Activated CD8-positive, alpha-beta memory T cell treated with anti-CD3 and anti-CD28 coated beads, Interleukin-2, amount 10 ng/mL, durations not matched to agents 7 days and 5 days (primary cell): ENCODE measurements at regions of chr3 and their contacts with region 1.

Region 1: DNA sequence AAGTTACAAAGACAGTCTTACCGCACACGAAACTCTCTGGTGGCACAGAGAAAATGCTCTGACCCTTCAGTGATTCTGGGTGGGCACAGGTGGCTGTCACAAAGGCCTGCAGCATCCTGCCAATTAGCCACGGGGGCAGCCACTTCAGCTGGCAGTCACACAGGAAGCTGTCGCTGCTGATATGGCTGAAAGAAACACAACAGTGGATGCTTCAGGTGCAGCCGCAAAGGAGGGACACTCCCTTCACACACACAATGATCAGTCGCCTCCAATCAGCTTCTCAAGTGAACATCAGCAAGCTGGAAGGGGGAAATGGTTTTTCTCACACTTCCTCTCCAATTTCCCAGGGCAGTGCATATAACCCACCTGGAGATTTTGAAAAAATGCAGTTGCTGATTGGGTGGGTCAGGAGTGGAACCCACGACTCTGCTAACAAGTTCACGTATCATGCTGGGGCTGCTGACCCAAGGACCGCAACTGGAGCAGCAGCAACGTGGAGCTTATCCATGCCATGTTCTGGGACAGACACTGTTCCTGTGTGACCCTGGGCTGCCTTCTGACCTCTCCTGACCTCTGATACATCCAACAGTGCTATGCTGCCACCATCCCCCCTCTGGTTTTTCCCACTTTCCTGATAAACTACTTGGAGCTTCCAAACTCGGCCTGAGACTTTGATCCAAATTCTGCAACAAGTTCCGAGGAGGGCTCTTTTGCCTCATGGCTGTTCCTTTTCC is 106.6 kb downstream of the LRIG1 start:
- DNase-seq: peak; percentile 73
- ATAC-seq: peak; percentile 88
- H3K4me3 Mint-ChIP-seq: peak overlapping the region; percentile 11
- H3K27ac Mint-ChIP-seq: peak overlapping the region; percentile 90
- H3K4me1 Mint-ChIP-seq: peaks cover 23% of the 10 kb centered on the region
- H3K27me3 Mint-ChIP-seq: no peaks in the 10 kb centered on the region

Region 2: DNA sequence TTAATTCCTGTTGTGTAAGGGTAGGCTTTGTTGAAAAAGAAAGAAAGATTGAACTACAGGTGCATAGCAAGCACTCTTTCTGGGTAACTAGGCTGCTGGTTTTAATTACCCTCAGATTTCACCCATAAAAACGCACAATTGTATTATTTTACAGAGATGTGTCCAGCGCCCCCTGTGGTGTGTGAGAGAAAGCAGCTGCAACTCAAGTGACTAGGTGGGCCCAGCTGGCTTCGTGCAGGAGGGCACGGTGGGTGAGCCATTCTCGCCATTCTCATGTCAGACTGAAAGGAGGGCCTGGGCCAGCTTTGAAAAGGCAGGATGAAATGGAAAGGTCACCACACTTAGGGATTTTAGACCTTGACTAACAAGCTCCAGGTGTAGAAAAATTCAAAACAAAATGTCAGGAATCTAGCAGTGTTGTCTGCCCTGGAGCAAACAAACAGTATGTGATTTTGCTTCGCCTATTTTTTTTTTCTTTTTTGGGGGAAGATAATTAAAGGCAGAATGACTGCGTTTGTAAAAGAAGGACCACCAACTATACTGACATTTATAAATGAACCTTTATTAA is 15.8 kb before region 1 on chr3:
- CTCF ChIA-PET with region 1: interaction called, 10 read pairs
- DNase-seq: no peak
- ATAC-seq: no peak
- H3K4me3 Mint-ChIP-seq: no peak overlapping the region
- H3K27ac Mint-ChIP-seq: peak overlapping the region; percentile 86
- H3K4me1 Mint-ChIP-seq: peaks cover 9% of the 10 kb centered on the region
- H3K27me3 Mint-ChIP-seq: no peaks in the 10 kb centered on the region